CD4-positive, alpha-beta T cell (primary cell): ENCODE measurements at regions of chr15 and their contacts with region 1.

Region 1: DNA sequence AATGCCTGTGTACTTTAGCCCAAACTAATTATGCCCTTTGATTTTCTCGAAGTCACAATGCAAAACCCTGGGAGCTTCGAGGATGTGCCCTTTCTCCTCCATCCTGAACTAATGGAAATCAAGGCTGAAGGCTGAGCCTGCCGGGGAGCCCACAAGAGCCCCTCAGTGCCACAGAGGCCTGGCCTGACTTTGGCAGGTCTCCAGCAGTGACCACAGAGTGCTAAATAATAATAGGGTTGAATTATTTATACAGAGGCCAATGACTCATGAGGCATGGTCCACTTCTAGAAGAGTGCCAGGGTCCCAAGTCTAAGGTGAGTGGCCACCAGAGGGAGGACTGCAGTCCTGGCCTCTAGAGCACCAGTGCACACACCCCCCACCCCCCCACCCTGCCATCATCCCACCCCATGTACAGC is 19.1 kb upstream of the GLCE start:
- DNase-seq: no peak
- ATAC-seq: no peak
- H3K4me3 ChIP-seq: no peak overlapping the region
- H3K4me3 Mint-ChIP-seq: no peak overlapping the region
- H3K27ac ChIP-seq: no peak overlapping the region
- H3K27ac Mint-ChIP-seq: no peak overlapping the region
- H3K4me1 ChIP-seq: no peaks in the 10 kb centered on the region
- H3K4me1 Mint-ChIP-seq: no peaks in the 10 kb centered on the region
- H3K27me3 ChIP-seq: peaks cover 0 to 8% of the 10 kb centered on the region in 2 experiments
- H3K27me3 Mint-ChIP-seq: peaks cover 78% of the 10 kb centered on the region
- CTCF ChIP-seq: no peak

Region 2: DNA sequence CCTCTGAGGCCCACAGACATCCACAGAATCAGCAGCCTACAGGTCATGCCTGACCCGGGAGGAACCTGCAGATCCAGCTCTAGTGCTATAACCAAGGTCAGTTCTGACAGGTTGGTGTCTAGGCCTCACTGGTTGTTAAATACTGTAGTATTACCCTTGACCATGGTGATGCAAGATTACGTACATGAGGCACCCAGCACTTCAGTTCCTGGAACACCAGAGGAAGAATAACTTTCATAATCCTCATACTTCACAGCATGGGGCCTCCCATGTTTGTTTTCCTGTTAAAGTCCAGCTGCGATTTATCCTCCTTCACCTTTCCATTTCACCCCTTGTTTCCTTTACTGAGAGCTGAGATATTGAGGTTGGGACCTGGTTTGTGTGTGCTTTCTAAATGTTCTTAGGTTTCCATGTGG is 15.2 kb before region 1 on chr15:
- CTCF ChIA-PET with region 1: no interaction called
- POLR2A ChIA-PET with region 1: no interaction called
- intact Hi-C with region 1: no loop called
- DNase-seq: no peak
- ATAC-seq: no peak
- H3K4me3 ChIP-seq: no peak overlapping the region
- H3K4me3 Mint-ChIP-seq: no peak overlapping the region
- H3K27ac ChIP-seq: no peak overlapping the region
- H3K27ac Mint-ChIP-seq: no peak overlapping the region
- H3K4me1 ChIP-seq: no peaks in the 10 kb centered on the region
- H3K4me1 Mint-ChIP-seq: no peaks in the 10 kb centered on the region
- H3K27me3 ChIP-seq: no peaks in the 10 kb centered on the region
- H3K27me3 Mint-ChIP-seq: no peaks in the 10 kb centered on the region
- CTCF ChIP-seq: no peak

Region 3: DNA sequence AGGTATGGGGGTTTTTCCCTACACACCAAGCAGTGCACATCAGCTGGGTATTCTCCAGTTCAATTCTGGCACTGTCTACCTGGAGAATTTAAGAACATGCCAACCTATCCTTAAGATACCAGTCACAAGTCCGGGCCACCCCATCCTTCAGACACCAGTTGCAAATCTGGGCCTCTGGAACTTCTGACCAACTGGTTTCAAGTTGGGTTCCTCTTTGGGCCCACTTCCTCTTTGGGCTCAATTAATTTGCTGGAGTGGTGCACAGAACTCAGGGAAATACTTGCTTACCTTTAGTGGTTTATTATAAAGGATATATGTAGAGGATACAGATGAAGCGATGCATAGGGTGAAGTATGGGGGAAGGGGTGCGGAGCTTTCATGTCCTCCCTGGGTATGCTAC is 44.4 kb after region 1 on chr15:
- CTCF ChIA-PET with region 1: no interaction called
- POLR2A ChIA-PET with region 1: no interaction called
- intact Hi-C with region 1: loop called in 1 of 2 experiments (anchors 5 kb)
- DNase-seq: peak in 1 of 14 experiments; percentile 8
- ATAC-seq: no peak
- H3K4me3 ChIP-seq: no peak overlapping the region
- H3K4me3 Mint-ChIP-seq: no peak overlapping the region
- H3K27ac ChIP-seq: no peak overlapping the region
- H3K27ac Mint-ChIP-seq: no peak overlapping the region
- H3K4me1 ChIP-seq: no peaks in the 10 kb centered on the region
- H3K4me1 Mint-ChIP-seq: no peaks in the 10 kb centered on the region
- H3K27me3 ChIP-seq: no peaks in the 10 kb centered on the region
- H3K27me3 Mint-ChIP-seq: no peaks in the 10 kb centered on the region
- CTCF ChIP-seq: no peak

Region 4: GRCh38 chr15:69780374-69780773 is 639.1 kb after region 1 on chr15:
- CTCF ChIA-PET with region 1: no interaction called
- POLR2A ChIA-PET with region 1: no interaction called
- intact Hi-C with region 1: no loop called
- DNase-seq: no peak
- ATAC-seq: no peak
- H3K4me3 ChIP-seq: no peak overlapping the region
- H3K4me3 Mint-ChIP-seq: no peak overlapping the region
- H3K27ac ChIP-seq: no peak overlapping the region
- H3K27ac Mint-ChIP-seq: no peak overlapping the region
- H3K4me1 ChIP-seq: peaks cover 18% of the 10 kb centered on the region
- H3K4me1 Mint-ChIP-seq: peaks cover 21% of the 10 kb centered on the region
- H3K27me3 ChIP-seq: no peaks in the 10 kb centered on the region
- H3K27me3 Mint-ChIP-seq: peaks cover 20% of the 10 kb centered on the region
- CTCF ChIP-seq: no peak